ENCODE measurements at regions of chr2 and their contacts with region 1.

Region 1: GRCh38 chr2:127233710-127234109 is 13.6 kb upstream of the CYP27C1 start:
- DNase-seq: no peak
- ATAC-seq: no peak
- H3K4me3 ChIP-seq: no peak overlapping the region
- H3K27ac ChIP-seq: no peak overlapping the region
- H3K4me1 ChIP-seq: no peaks in the 10 kb centered on the region
- H3K27me3 ChIP-seq: peaks cover 0 to 3% of the 10 kb centered on the region in 2 donors

Region 2: DNA sequence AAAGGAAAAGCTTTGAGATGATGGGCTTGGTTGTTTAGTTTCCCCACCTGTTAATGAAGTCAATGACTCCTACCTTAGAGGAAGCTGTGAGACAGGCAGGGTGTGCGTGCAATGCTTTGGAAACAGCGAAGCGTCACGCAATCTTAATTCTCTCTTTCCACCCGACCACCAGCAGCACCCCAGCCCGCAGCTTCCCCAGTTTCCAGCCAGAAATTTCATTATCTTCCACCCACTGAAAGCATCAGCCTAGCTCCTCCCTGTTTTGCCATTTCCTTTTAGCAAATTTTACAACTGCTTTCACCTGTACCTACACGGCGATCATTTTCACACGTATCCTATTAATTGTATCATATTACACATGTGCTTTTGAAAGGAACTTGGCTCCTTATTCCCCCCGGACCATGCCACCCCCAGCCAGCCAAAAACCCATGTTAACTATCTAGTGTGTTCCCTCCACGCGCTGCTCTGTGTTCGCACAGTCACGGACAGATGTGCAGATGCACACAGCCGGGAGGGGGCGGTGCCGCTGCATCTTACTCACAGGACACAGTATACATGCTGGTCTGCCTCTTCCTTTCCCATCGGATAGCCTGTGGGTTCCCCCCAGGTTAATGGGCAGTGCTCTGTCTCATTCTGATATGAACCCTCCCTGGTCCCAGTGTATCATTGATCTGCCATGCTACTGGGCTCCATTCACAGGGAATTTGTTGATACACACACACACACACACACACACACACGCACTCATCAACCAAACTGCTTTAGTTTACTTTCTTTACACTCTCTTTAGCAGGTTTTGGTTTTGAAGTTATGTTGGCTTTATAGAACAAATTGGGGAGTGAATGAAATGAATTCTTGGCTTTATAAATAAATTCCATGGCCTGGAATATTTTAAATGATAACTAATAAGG is 36.0 kb before region 1 on chr2:
- intact Hi-C with region 1: no loop called
- DNase-seq: peak in 1 of 2 donors; percentile 81
- ATAC-seq: no peak
- H3K4me3 ChIP-seq: no peak overlapping the region
- H3K27ac ChIP-seq: no peak overlapping the region
- H3K4me1 ChIP-seq: peaks cover 0 to 2% of the 10 kb centered on the region in 2 donors
- H3K27me3 ChIP-seq: no peaks in the 10 kb centered on the region

Region 3: GRCh38 chr2:127254386-127254981 is 20.8 kb after region 1 on chr2:
- intact Hi-C with region 1: loop called in 1 of 2 experiments (anchors 1 kb)
- DNase-seq: no peak
- ATAC-seq: no peak
- H3K4me3 ChIP-seq: no peak overlapping the region
- H3K27ac ChIP-seq: no peak overlapping the region
- H3K4me1 ChIP-seq: no peaks in the 10 kb centered on the region
- H3K27me3 ChIP-seq: no peaks in the 10 kb centered on the region

Region 4: DNA sequence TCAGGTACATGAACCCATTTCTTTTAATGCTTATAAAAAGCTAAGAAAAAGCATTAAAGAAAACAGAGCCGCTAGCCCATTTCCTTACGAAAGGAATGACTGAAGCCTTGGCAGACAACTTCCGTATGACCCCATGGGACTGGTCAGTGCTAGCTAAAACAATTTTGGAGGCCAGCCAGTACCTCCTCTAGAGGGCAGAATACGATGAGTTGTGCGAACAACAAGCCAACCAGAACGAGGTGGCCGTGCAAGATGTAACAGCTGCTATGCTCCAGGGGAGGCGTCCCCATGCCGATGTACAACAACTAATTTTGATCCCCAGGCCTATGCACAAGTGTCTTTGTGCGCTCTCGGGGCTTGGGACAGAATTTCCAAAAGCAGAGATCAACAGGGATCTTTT is 137.3 kb after region 1 on chr2:
- intact Hi-C with region 1: no loop called
- DNase-seq: peak; percentile 81 to 83
- ATAC-seq: peak; percentile 82
- H3K4me3 ChIP-seq: peak overlapping the region in 1 of 2 donors; percentile 11
- H3K27ac ChIP-seq: peak overlapping the region in 1 of 2 donors; percentile 75
- H3K4me1 ChIP-seq: no peaks in the 10 kb centered on the region
- H3K27me3 ChIP-seq: no peaks in the 10 kb centered on the region